Activated naive CD4-positive, alpha-beta T cell treated with anti-CD3 and anti-CD28 coated beads for 36 hours (primary cell): ENCODE measurements at regions of chr3 and their contacts with region 1.

Region 1: GRCh38 chr3:187025656-187026316 is 95.5 kb downstream of the ST6GAL1 start:
- DNase-seq: peak; percentile 61
- H3K4me3 Mint-ChIP-seq: peak overlapping the region; percentile 79
- H3K27ac Mint-ChIP-seq: peak overlapping the region; percentile 97
- H3K4me1 Mint-ChIP-seq: peaks cover 51% of the 10 kb centered on the region
- H3K27me3 Mint-ChIP-seq: no peaks in the 10 kb centered on the region

Region 2: DNA sequence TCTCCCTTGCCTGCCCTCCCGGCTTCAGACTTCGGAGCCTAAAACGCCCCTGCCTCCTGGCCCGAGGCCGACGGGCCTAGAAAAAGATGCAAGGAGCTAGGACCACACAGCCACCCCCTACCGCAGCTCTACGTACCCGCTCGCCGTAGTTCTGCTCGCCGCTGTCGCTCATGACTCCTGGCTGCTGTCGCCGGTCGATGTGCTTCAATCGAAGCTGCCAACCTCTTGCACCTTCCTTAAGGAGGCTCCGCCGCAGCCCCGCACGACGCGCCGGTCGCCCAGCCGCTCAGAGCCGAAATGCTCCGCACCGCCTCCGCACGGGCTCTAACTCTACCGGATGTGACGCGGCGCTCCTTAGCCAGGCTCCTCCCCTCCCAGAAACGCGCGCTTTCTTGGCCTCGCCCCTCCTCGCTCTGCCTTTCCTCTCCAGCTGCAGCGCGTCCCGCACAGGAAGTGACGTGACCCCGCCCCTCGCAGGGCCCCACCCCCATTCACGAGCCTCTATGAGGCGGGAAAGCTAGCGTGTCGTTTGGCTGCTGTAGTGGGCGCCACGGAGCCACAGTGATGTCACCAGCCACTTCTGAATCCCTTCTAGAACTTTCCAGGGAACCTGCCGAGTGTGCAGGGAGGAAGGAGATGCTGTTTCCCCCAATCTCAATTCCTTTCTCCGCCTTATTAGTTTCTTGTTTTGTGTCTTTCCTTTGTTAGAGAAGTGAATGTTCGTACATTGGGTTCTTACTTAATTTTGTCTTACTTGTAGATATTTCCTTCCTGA is 1087.9 kb before region 1 on chr3 and contains the start of gene TRA2B:
- CTCF ChIA-PET with region 1: no interaction called
- intact Hi-C with region 1: loop called (anchors 5 kb)
- DNase-seq: peak; percentile 99
- H3K4me3 Mint-ChIP-seq: peak within 1 kb of the TSS; percentile 100
- H3K27ac Mint-ChIP-seq: peak within 1 kb of the TSS; percentile 100
- H3K4me1 Mint-ChIP-seq: peaks cover 20% of the 10 kb centered on the region
- H3K27me3 Mint-ChIP-seq: no peaks in the 10 kb centered on the region
- total RNA-seq, gene TRA2B: 172 to 176 TPM

Region 3: DNA sequence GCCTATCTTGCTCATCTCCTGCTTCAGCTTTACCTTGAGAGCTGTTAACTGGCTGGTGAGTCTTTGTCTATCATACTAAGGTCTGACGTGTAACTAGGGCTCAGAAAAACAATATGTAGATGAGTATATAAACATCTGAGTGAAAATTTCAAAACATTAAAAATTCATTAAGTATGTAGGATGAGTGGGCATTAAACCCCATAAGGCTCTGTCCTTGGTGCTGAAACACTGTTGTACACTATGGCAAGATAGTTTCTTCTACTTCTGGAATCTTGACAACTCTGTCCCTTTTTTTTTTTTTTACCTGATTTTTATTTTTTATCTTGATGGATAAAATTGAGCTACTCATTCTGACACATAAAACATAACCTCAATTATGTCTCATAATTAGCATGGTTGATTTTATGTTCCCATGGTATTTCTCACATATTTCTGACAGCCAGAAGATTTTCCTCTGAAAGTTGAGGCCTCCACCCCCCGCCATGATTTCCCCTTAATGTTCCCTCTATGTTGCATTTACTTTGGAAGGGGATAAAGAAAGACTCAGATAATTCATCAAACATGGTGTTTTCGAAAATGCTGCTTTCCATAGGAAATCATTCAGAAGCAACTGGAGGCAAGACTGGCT is 718.1 kb before region 1 on chr3:
- CTCF ChIA-PET with region 1: no interaction called
- intact Hi-C with region 1: no loop called
- DNase-seq: peak; percentile 24
- H3K4me3 Mint-ChIP-seq: no peak overlapping the region
- H3K27ac Mint-ChIP-seq: no peak overlapping the region
- H3K4me1 Mint-ChIP-seq: no peaks in the 10 kb centered on the region
- H3K27me3 Mint-ChIP-seq: peaks cover 12% of the 10 kb centered on the region

Region 4: DNA sequence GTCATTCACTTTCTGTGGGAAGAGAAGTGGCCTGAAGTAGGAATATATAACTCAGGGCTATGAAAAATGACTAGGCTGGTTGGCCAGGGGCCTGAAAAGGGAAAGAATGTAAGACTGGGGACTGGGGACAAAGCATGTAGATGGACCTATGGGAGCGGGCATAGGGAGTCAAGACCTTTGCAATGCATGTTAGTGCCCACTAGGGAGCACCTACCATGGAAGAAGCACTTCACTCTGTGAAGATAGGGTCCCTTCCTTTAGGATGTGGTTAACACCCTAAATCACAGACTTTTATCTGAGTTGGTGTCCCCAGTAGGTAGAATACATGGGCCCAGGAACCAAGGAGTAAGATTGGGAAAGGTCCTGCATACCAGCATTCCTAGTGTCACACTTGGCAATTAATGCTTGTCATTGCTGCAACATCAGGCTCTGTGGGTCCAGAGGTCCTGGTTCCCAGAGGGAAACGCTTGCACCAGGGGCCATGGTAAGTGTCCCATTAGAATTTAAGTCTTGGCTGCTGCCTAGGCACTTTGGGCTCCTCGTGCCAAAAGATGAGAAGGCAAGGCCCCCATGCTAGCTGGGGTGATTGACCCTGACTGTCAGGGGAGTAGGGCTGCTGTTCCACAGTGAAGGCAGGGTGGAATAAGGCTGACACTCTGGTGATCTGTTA is 561.2 kb before region 1 on chr3:
- CTCF ChIA-PET with region 1: no interaction called
- intact Hi-C with region 1: no loop called
- DNase-seq: no peak
- H3K4me3 Mint-ChIP-seq: no peak overlapping the region
- H3K27ac Mint-ChIP-seq: no peak overlapping the region
- H3K4me1 Mint-ChIP-seq: no peaks in the 10 kb centered on the region
- H3K27me3 Mint-ChIP-seq: no peaks in the 10 kb centered on the region

Region 5: DNA sequence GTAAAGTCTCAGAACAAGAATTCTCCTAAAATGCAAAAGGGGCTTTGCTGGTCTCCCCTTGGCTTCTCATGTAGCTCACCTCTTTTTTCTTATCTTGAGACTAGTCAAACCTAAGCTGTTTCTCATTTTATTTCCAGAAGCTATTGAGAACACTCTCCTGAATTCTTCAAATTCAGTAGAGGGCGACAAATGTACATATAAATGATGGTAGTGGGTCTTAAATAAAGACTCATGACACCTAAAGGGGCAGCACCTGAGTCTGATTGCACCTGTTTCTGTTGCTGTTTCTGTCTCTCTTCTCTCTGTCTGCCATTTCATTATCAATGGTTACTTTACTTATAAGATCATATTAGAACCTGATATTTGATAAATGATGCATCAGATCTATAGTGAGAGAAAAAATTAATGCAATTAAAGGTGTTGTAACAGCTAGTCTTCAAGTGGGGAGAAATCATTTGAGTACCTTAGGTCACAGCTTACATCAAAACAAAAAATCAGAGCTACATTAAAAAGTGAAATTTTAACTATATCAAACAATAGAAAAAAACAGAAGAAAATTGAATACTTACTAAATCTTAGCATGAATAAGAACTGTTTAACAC is 176.3 kb before region 1 on chr3:
- CTCF ChIA-PET with region 1: interaction called, 8 read pairs
- intact Hi-C with region 1: loop called (anchors 2 kb)
- DNase-seq: peak; percentile 45
- H3K4me3 Mint-ChIP-seq: no peak overlapping the region
- H3K27ac Mint-ChIP-seq: no peak overlapping the region
- H3K4me1 Mint-ChIP-seq: peaks cover 12% of the 10 kb centered on the region
- H3K27me3 Mint-ChIP-seq: peaks cover 3% of the 10 kb centered on the region

Region 6: GRCh38 chr3:186953011-186953487 is 72.7 kb before region 1 on chr3:
- CTCF ChIA-PET with region 1: no interaction called
- intact Hi-C with region 1: loop called (anchors 1 kb)
- DNase-seq: peak; percentile 27
- H3K4me3 Mint-ChIP-seq: peak overlapping the region; percentile 4
- H3K27ac Mint-ChIP-seq: peak overlapping the region; percentile 60
- H3K4me1 Mint-ChIP-seq: peaks cover 67% of the 10 kb centered on the region
- H3K27me3 Mint-ChIP-seq: no peaks in the 10 kb centered on the region

Region 7: DNA sequence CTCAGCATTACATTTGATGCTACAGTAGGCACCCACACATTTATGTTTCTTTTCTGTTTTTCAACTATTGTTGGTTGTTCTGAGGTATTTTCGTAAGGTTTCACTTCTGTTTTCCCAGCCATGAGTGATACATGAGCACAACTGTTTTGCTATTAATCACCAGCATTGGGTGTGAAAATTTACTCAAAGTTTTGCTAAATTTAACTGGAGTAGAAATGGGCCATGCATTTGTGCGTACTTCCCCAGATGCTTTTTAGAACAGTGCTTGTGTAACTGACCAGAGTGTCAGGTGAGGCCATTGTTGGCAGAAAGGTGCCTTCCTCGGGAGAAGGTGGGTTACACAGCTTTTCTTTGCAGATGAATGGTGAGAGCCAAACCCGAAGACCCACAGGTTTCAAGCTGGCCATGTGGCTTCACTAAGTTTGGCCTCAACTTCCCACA is 25.1 kb before region 1 on chr3:
- CTCF ChIA-PET with region 1: interaction called, 4 read pairs
- intact Hi-C with region 1: loop called (anchors 1 kb)
- DNase-seq: peak; percentile 76
- H3K4me3 Mint-ChIP-seq: peak overlapping the region; percentile 25
- H3K27ac Mint-ChIP-seq: peak overlapping the region; percentile 90
- H3K4me1 Mint-ChIP-seq: peaks cover 76% of the 10 kb centered on the region
- H3K27me3 Mint-ChIP-seq: no peaks in the 10 kb centered on the region

Region 8: GRCh38 chr3:187041362-187042307 is 15.8 kb after region 1 on chr3:
- CTCF ChIA-PET with region 1: interaction called, 13 read pairs
- intact Hi-C with region 1: loop called (anchors 2 kb)
- DNase-seq: peak; percentile 73
- H3K4me3 Mint-ChIP-seq: peak overlapping the region; percentile 60
- H3K27ac Mint-ChIP-seq: peak overlapping the region; percentile 98
- H3K4me1 Mint-ChIP-seq: peaks cover 82% of the 10 kb centered on the region
- H3K27me3 Mint-ChIP-seq: no peaks in the 10 kb centered on the region

Region 9: GRCh38 chr3:187130346-187131066 is 104.7 kb after region 1 on chr3:
- CTCF ChIA-PET with region 1: no interaction called
- intact Hi-C with region 1: loop called (anchors 1 kb)
- DNase-seq: peak; percentile 64
- H3K4me3 Mint-ChIP-seq: peak overlapping the region; percentile 42
- H3K27ac Mint-ChIP-seq: peak overlapping the region; percentile 98
- H3K4me1 Mint-ChIP-seq: peaks cover 40% of the 10 kb centered on the region
- H3K27me3 Mint-ChIP-seq: no peaks in the 10 kb centered on the region

Region 10: GRCh38 chr3:187594272-187594671 is 568.5 kb after region 1 on chr3:
- CTCF ChIA-PET with region 1: no interaction called
- intact Hi-C with region 1: no loop called
- DNase-seq: no peak
- H3K4me3 Mint-ChIP-seq: no peak overlapping the region
- H3K27ac Mint-ChIP-seq: no peak overlapping the region
- H3K4me1 Mint-ChIP-seq: no peaks in the 10 kb centered on the region
- H3K27me3 Mint-ChIP-seq: peaks cover 36% of the 10 kb centered on the region

Region 11: DNA sequence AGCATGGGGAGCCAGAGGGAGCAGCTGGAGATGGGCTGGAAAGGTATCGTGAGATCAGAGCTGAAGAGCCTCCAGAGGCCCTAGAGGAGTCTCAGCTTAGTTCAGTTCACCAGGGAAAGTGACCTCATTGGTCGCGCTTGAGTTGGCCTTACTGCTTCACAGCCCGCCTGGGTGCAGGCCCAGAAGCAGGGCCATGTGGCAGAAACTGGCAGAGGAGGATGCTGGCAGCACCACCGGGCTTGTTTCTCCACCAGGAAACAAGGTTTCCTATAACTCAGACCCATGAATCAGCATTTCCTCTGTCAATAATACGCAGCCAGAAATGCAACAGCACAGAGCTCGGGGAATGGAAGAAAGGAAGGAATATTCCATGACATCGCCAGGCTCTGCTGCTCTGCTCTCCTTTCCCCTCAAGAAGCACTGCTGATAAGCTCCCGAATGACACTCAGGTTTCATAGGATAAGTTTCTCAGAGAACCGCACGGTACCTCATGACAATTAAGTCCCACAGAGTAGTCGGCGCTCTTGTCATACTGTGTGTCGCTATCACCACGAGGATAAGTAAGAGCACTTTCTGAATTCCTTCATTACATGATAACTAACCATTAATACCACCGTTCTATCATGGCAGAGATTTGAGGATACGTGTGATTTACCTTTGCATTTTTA is 981.1 kb after region 1 on chr3:
- CTCF ChIA-PET with region 1: no interaction called
- intact Hi-C with region 1: no loop called
- DNase-seq: peak; percentile 21
- H3K4me3 Mint-ChIP-seq: no peak overlapping the region
- H3K27ac Mint-ChIP-seq: no peak overlapping the region
- H3K4me1 Mint-ChIP-seq: peaks cover 14% of the 10 kb centered on the region
- H3K27me3 Mint-ChIP-seq: no peaks in the 10 kb centered on the region